HAP-1 (cell line): ENCODE measurements at regions of chr20 and their contacts with region 1.

Region 1: DNA sequence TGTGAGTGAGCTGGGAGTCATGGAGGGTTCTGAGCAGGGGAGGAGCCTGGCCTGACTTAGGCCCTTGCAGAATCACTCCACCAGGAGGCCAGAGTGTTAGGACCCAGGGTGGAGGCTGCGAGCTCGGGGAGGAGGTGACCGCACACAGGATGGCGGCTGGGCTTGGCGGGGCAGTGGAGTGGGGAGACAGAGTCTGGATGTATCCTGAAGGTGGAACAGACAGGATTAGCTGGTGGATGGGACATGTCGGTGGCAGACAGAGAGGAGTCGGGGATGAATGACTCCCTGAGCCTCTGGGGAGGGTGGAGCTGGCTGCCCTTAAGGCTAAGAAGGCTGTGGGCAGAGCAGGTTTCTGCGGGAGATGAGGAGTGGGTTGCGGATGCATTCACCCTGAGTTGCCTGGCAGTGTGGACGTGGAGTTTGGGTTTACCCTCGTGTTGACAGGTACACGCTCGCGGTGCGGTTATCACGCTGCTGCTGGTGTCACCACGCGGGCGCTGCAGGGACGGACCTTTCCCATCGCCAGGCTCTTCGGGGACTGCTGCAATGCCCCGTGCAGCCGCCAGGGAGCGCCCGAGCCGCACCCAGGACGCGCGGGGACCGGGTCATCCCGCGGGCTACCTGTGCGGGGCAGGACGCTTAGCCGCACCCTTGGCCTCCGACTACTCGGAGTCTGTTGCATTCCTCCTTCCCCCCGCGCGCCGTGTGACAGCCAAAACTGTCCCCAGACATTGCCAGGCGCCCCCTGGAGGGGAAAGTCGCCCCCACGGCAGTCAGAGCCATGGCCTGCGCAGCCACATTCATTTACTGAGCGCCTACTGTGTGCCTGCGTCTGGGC is 43.0 kb upstream of the PTGIS start:
- DNase-seq: peak; percentile 78 to 93
- H3K4me3 ChIP-seq: peak overlapping the region; percentile 10; the same call in 1 of the 2 replicates
- H3K4me1 ChIP-seq: peaks cover 5% of the 10 kb centered on the region
- H3K27me3 ChIP-seq: no peaks in the 10 kb centered on the region

Region 2: GRCh38 chr20:49330544-49331239 is 280.2 kb before region 1 on chr20:
- in situ Hi-C with region 1: loop called (anchors 5 kb)
- DNase-seq: no peak
- H3K4me3 ChIP-seq: no peak overlapping the region
- H3K4me1 ChIP-seq: no peaks in the 10 kb centered on the region
- H3K27me3 ChIP-seq: peaks cover 40% of the 10 kb centered on the region

Region 3: GRCh38 chr20:49888345-49888966 is 277.5 kb after region 1 on chr20:
- in situ Hi-C with region 1: loop called (anchors 5 kb)
- DNase-seq: peak; percentile 71 to 84
- H3K4me3 ChIP-seq: no peak overlapping the region
- H3K4me1 ChIP-seq: peaks cover 2% of the 10 kb centered on the region; the same call in 1 of the 2 replicates
- H3K27me3 ChIP-seq: no peaks in the 10 kb centered on the region

Region 4: GRCh38 chr20:50070991-50071888 is 460.3 kb after region 1 on chr20:
- in situ Hi-C with region 1: loop called (anchors 25 kb)
- DNase-seq: peak; percentile 78 to 95
- H3K4me3 ChIP-seq: peak overlapping the region; percentile 26
- H3K4me1 ChIP-seq: peaks cover 3% of the 10 kb centered on the region; the same call in 1 of the 2 replicates
- H3K27me3 ChIP-seq: no peaks in the 10 kb centered on the region